Aorta (tissue), 5 donors: ENCODE measurements at regions of chr7 and their contacts with region 1.

Region 1: DNA sequence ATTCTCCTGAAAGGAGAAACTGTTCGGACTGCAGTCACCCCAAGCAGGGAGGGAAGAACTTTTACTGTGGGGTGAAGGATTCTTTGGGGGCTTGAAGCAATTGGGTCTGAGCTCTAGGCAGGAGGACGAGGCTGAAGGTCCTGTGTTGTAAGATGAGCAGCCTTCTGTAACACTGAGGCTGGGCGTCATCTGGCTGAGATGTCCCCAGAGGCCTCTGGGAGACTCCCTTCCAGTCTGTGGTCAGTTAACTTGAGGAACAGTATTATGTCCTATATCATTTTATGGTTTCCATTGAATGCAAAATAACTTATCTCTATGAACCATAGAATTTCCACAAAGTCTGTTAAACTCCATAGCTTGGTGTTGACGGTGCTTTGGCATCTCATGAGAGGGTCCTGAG is 26.3 kb downstream of the FIGNL1 start:
- DNase-seq: no peak
- ATAC-seq: no peak
- H3K4me3 ChIP-seq: no peak overlapping the region
- H3K27ac ChIP-seq: no peak overlapping the region
- H3K4me1 ChIP-seq: no peaks in the 10 kb centered on the region
- H3K27me3 ChIP-seq: no peaks in the 10 kb centered on the region

Region 2: GRCh38 chr7:50112250-50112975 is 311.4 kb before region 1 on chr7:
- intact Hi-C with region 1: no loop called
- DNase-seq: no peak
- ATAC-seq: no peak
- H3K4me3 ChIP-seq: no peak overlapping the region
- H3K27ac ChIP-seq: no peak overlapping the region
- H3K4me1 ChIP-seq: no peaks in the 10 kb centered on the region
- H3K27me3 ChIP-seq: peaks cover 0 to 2% of the 10 kb centered on the region in 2 donors

Region 3: DNA sequence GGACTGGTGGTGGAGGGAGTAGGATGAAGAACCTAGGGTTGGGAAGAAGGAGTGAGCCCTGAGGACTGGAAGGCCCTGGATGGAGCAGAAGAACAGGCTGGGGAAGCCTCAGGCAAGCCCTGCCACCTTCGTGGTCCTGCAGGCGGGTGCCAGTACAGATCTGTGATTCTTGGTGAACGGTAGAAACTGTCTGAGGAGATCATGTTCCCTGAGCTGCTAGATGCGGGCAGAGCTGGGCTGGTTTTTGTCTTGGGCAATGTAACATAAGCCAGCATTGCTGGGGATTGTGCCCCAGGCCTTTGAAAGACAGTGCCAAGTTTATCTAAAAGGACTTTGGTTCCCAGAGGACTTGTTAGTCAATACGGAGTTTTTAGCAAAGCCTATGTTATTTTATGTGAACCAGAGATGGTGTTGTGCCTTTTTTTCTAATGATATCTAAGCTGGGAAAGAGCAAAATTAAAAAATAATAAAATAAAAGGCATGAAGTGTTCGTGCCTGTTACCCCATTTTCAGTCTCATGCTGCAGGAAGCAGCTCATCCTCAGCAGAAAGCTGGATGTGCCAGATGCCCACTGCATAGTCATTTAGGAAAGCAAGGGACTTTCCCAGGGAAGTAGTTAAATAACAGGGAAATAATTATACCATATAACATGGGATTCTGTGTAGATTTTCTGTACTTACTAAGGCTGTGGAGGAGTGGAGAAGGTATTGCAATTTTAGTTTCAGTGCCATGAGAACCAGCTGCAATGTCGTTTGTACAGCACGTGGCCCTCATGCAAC is 50.7 kb after region 1 on chr7:
- intact Hi-C with region 1: loop called in 1 of 2 experiments (anchors 5 kb)
- DNase-seq: no peak
- ATAC-seq: no peak
- H3K4me3 ChIP-seq: no peak overlapping the region
- H3K27ac ChIP-seq: no peak overlapping the region
- H3K4me1 ChIP-seq: no peaks in the 10 kb centered on the region
- H3K27me3 ChIP-seq: no peaks in the 10 kb centered on the region

Region 4: DNA sequence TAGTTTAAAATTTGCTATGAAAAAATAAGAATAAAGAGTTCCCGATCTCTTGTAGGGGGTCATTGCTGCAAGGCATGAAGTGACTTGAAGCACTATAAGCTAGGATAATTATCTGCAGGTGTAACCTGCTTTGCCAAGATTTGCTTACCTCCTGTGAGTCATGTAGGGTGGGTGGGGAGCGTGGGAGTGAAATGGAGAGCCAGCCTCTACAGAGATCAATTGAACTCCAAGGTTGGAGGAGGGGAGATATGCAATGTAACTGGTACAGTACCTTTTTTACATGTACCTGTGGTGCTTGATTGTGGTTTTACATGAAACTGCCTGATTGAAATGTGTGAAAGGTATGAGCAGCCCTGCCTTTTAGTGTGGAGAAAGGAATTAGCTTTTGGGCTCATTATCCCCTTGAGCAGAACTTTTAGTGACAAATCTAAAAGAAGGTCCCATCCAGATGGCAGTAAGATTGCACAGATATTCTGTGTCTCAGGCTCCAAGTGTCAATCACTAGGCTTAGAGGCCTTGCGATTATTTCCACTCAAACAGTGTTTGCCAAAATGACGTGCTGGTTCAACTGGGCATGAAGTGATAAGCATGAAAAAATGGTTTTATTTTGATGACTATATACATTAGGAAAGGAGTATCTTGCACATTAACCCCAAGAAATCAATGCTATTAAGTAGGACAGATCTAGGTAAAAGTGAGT is 497.4 kb after region 1 on chr7:
- intact Hi-C with region 1: no loop called
- DNase-seq: no peak
- ATAC-seq: no peak
- H3K4me3 ChIP-seq: no peak overlapping the region
- H3K27ac ChIP-seq: no peak overlapping the region
- H3K4me1 ChIP-seq: no peaks in the 10 kb centered on the region
- H3K27me3 ChIP-seq: no peaks in the 10 kb centered on the region